Psoas muscle (tissue), 8 donors: ENCODE measurements at regions of chr6 and their contacts with region 1.

Region 1: DNA sequence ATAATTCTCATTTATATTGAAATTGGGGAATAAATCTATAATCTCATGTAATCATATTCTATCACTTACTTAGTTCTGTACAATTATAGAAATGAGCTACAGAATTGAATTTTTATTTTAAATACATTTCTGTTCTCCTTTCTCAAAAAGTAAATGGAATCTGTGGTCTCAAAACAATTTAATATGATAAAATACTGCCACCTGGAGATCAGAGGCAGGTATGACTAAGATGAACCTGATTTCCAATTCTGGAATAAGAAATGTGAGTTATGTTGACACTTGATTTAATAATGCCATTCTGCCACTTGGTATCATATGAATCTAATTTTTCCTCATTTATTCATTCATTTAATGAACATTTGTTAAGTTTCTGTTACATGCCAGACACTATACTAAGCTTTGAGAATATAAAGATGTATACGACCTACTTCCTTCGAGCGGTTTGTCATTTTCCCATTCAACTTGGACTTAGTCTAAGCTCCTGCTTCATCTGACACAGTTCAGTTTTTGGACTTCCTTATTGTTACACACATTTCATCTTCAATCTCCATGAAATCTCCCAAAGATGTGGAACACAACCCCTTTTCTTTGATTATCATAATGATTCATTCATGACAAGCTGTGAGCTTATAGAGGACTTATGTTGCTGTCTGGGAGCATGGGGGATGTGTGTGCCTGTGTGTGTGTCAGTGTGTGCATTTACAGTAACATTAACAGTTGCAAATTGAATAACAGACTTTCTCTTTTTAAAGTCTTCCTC is 7.5 kb upstream of the CCDC28A start:
- DNase-seq: no peak
- ATAC-seq: peak in 1 of 4 donors; percentile 59
- H3K4me3 ChIP-seq: no peak overlapping the region
- H3K27ac ChIP-seq: no peak overlapping the region
- H3K4me1 ChIP-seq: no peaks in the 10 kb centered on the region
- H3K27me3 ChIP-seq: no peaks in the 10 kb centered on the region
- CTCF ChIP-seq: peak; percentile 68

Region 2: GRCh38 chr6:137927777-137928218 is 838.3 kb before region 1 on chr6:
- intact Hi-C with region 1: no loop called
- DNase-seq: no peak
- ATAC-seq: peak in 1 of 4 donors; percentile 27
- H3K4me3 ChIP-seq: no peak overlapping the region
- H3K27ac ChIP-seq: peak overlapping the region; percentile 84
- H3K4me1 ChIP-seq: peaks cover 31% of the 10 kb centered on the region
- H3K27me3 ChIP-seq: no peaks in the 10 kb centered on the region
- CTCF ChIP-seq: no peak

Region 3: DNA sequence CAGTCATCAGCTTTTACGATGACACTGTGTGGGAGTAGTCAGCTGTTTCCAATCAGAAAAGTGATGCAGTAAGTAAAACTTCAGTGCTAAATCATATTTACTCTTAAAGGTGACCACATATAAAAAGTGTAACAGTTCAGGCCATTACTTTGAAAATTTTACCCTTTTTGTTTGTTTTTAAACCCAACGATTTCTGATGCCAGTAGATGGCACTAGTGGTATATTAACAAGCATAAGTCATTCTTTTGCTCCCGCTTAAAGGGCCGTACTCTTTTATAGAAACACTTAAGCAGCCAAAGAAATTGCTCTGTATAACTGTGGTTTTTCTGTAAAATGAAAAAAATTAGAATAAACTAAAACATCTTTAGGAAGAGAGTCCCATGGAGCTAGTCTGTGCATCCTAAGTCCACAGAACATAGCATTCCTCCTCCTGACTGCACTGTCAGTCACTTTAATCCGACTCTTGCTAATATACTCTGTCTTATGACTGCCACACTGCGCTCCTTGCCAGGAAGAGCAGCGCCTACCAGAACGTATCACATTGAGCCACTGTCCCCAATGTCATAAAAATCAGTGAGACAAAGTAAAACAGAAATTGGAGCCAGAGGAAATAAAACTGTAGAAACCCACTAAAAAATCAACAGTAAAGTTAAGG is 337.0 kb before region 1 on chr6:
- intact Hi-C with region 1: loop called in 1 of 2 experiments (anchors 2 kb)
- DNase-seq: no peak
- ATAC-seq: peak in 2 of 4 donors; percentile 55 to 69
- H3K4me3 ChIP-seq: no peak overlapping the region
- H3K27ac ChIP-seq: no peak overlapping the region
- H3K4me1 ChIP-seq: no peaks in the 10 kb centered on the region
- H3K27me3 ChIP-seq: peaks cover 0 to 1% (median 0%) of the 10 kb centered on the region in 3 donors
- CTCF ChIP-seq: peak; percentile 51

Region 4: DNA sequence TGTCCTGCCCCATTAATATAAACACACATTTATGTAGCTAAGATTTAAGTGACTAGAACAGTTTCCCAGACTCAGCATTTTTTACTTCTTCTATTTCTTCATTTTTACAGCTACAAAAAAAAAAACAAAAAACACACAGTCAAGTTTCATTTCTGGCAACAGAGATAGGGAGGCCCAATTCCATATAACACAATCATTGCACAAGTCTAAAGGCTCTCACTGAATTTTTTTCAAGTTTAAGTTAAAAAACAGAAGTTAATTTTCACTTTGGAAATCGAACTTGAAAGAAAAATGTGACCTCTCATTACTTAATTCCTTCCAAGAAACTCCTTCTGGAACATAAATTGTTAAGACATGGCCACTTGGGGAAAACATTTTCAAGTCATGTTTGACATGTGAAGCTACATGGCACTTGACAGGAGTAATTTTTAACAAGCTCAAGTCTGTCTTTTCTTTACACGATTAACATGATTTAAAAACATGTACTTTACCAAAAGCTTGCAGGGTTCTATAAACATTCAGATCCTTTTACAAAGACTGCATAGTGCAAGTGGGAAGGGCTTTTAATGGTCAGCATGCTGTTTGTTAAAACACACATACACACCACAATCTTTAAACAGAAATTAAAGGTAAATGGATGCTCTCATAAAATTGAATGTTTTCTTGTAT is 92.6 kb before region 1 on chr6:
- intact Hi-C with region 1: no loop called
- DNase-seq: no peak
- ATAC-seq: no peak
- H3K4me3 ChIP-seq: no peak overlapping the region
- H3K27ac ChIP-seq: no peak overlapping the region
- H3K4me1 ChIP-seq: no peaks in the 10 kb centered on the region
- H3K27me3 ChIP-seq: no peaks in the 10 kb centered on the region
- CTCF ChIP-seq: no peak

Region 5: GRCh38 chr6:138692058-138692977 is 73.8 kb before region 1 on chr6:
- intact Hi-C with region 1: loop called (anchors 5 kb)
- DNase-seq: peak; percentile 77 to 88
- ATAC-seq: peak; percentile 78 to 95 (median 86)
- H3K4me3 ChIP-seq: peak overlapping the region; percentile 78
- H3K27ac ChIP-seq: peak overlapping the region; percentile 2
- H3K4me1 ChIP-seq: no peaks in the 10 kb centered on the region
- H3K27me3 ChIP-seq: no peaks in the 10 kb centered on the region
- CTCF ChIP-seq: peak; percentile 85

Region 6: DNA sequence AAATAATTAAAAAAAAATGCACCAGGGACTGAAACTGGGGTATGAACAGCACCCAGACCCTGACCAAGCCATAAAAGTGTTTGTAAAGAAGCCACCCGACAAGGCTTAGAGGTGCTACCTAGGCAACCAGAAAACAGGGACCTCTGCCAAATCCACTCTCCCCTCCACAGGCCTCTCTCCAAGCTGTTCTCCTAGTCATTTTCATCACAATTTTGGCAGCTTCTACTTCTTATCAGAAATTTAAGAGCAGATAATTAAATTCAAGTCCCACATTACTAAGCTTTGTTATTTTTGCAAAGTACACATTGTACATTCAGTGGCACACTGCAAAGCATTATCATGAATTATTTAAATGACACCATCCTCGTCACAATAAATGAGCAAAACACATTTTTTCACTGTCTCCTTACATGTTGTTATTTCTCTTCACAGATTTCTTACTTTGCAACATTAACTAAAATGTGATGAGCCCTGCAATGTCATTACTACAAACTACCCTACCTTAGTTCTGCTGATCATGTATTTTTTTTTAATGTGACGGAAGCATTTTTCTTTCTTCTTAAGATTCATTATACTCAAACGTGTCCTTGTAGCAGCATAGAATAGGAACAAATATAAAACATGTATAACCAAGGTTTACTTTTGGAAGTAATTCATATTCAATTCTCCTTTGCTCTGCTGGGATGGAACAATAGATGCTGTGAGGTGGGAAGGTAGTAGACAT is 67.9 kb after region 1 on chr6:
- intact Hi-C with region 1: no loop called
- DNase-seq: no peak
- ATAC-seq: no peak
- H3K4me3 ChIP-seq: no peak overlapping the region
- H3K27ac ChIP-seq: no peak overlapping the region
- H3K4me1 ChIP-seq: no peaks in the 10 kb centered on the region
- H3K27me3 ChIP-seq: no peaks in the 10 kb centered on the region
- CTCF ChIP-seq: no peak